ENCODE measurements at regions of chr3 and their contacts with region 1.

Region 1: DNA sequence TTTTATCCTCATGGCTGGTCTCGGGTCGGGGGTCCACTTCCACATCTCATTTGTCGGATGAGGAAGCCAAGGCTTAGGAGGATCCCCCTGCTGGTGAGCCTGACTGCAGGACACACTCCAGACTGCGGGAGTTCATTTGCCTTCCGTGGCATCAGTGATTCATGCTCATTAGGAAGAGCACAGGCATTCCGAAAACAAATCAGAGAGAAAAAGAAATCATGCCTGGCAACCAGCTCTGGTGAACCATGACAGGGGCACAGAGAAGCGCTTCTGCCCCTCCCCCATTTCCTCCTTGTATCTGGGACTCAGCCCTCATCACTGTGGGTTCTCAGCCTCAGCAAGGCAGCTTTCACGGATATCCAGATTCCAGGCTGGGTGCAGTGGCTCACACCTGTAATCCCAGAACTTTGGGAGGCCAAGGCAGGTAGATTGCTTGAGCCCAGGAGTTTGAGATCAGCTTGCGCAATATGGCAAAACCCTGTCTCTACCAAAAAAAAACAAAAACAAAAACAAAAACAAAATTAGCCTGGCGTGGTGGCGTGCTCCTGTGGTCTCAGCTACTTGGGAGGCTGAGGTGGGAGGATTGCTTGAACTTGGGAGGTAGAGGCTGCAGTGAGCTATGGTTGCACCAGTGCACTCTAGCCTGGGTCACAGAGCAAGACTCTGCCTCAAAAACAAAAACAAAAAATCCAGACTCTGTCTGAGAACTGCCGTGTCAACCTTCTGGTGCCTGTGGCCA is 28.4 kb downstream of the IRAK2 start:
- DNase-seq: peak; percentile 85
- ATAC-seq: peak; percentile 45
- H3K4me3 Mint-ChIP-seq: peak overlapping the region; percentile 41
- H3K27ac Mint-ChIP-seq: peak overlapping the region; percentile 97
- H3K4me1 Mint-ChIP-seq: peaks cover 85% of the 10 kb centered on the region
- H3K27me3 Mint-ChIP-seq: no peaks in the 10 kb centered on the region

Region 2: DNA sequence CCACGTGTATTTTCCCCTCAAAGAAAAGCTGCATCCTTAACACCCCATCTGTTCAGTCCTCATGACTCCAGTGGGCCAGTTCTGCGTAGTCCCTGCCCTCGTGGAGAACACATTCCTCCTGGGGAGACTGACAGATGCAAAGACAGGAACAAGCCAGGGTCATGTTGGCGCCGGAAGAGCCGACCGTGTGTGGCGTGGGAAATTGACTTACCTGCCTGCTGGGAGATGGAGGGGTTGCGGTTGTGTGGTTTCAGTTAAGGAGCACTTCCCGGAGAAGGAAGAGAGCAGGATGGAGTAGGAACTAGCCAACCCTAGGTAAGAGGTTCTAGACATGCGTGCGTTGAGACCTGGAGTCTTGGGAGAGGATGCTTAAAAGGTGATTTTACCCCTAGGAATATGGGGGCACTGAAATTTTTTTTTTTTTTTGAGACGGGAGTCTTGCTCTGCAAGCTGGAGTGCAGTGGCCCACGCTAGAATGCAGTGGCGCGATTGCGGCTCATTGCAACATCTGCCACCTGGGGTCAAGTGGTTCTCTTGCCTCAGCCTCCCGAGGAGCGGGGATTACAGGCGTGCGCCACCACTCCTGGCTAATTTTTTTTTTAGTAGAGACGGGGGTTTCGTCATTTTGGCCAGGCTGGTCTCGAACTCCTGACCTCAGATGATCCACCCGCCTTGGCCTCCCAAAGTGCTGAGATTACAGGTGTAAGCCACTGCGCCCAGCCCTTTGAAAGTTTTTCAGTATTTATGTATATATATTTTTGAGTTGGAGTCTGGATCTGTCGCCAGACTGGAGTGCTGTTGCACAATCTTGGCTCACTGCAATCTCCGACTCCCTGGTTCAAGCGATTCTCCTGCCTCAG is 50.2 kb before region 1 on chr3:
- CTCF ChIA-PET with region 1: interaction called, 4 read pairs
- POLR2A ChIA-PET with region 1: interaction called, 3 read pairs
- intact Hi-C with region 1: loop called (anchors 1 to 2 kb)
- DNase-seq: peak; percentile 57
- ATAC-seq: peak; percentile 15
- H3K4me3 Mint-ChIP-seq: peak overlapping the region; percentile 97
- H3K27ac Mint-ChIP-seq: peak overlapping the region; percentile 89
- H3K4me1 Mint-ChIP-seq: peaks cover 28% of the 10 kb centered on the region
- H3K27me3 Mint-ChIP-seq: no peaks in the 10 kb centered on the region

Region 3: GRCh38 chr3:10164546-10165393 is 28.4 kb before region 1 on chr3 and contains the start of gene IRAK2:
- CTCF ChIA-PET with region 1: interaction called, 3 read pairs
- POLR2A ChIA-PET with region 1: no interaction called
- intact Hi-C with region 1: loop called in 1 of 2 experiments (anchors 2 kb)
- DNase-seq: peak; percentile 83
- ATAC-seq: peak; percentile 79
- H3K4me3 Mint-ChIP-seq: peak within 1 kb of the TSS; percentile 70
- H3K27ac Mint-ChIP-seq: peak within 1 kb of the TSS; percentile 13
- H3K4me1 Mint-ChIP-seq: peaks cover 21% of the 10 kb centered on the region
- H3K27me3 Mint-ChIP-seq: no peaks in the 10 kb centered on the region
- total RNA-seq, gene IRAK2: 3.9 to 4.0 TPM

Region 4: DNA sequence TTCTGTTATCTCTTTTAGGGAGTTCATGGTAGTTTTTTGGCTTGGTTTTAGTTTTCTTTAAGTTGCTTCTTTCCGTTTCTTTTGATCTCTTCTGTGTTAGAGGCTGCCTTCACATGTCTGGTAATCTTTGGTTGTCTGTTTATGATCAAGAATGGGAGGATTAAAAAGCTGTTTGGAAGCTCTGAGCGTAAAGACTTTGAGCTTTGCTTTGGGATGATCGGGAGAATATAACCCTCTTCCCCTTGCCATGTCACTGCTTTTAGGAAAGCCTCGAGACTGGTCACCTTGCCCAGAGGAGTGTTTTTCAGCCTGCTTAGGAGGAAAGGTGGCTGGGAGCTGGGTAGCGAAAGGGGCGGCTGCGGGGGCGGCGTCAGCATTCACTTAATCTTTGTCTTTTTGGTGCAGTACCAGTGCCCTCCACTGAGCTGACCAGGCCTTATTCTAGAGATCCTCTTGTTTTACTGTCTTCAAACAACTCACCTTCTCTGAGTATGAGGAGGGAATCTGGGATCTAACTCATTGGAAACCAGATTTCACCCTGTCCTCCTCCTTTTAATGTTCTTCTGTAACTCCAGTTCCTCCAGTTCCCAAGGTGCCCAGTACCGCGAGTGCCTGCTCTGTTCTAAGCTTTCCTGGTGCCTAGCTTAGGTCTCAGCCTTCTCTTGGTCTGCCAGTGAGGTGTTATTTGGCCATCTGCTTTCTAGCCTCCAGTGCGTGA is 70.7 kb after region 1 on chr3:
- CTCF ChIA-PET with region 1: interaction called, 10 read pairs
- POLR2A ChIA-PET with region 1: interaction called, 3 read pairs
- intact Hi-C with region 1: no loop called
- DNase-seq: peak; percentile 86
- ATAC-seq: peak; percentile 94
- H3K4me3 Mint-ChIP-seq: peak overlapping the region; percentile 59
- H3K27ac Mint-ChIP-seq: peak overlapping the region; percentile 91
- H3K4me1 Mint-ChIP-seq: peaks cover 85% of the 10 kb centered on the region
- H3K27me3 Mint-ChIP-seq: no peaks in the 10 kb centered on the region

Measured in activated CD4-positive, alpha-beta T cell treated with anti-CD3 and anti-CD28 coated beads for 36 hours (primary cell).